ENCODE measurements at regions of chr6 and their contacts with region 1.

Region 1: GRCh38 chr6:137927777-137928218 is 60.7 kb downstream of the TNFAIP3 start:
- DNase-seq: peak; percentile 34 to 81 (median 74)
- ATAC-seq: peak; percentile 100
- H3K4me3 ChIP-seq: no peak overlapping the region
- H3K4me3 Mint-ChIP-seq: peak overlapping the region in 9 of 10 donors; percentile 60 to 87 (median 76)
- H3K27ac ChIP-seq: peak overlapping the region; percentile 46
- H3K27ac Mint-ChIP-seq: peak overlapping the region; percentile 15 to 93 (median 86)
- H3K4me1 ChIP-seq: peaks cover 19 to 25% of the 10 kb centered on the region in 2 donors
- H3K4me1 Mint-ChIP-seq: peaks cover 26 to 55% (median 41%) of the 10 kb centered on the region in 7 donors
- H3K27me3 ChIP-seq: no peaks in the 10 kb centered on the region
- H3K27me3 Mint-ChIP-seq: no peaks in the 10 kb centered on the region

Region 2: GRCh38 chr6:137791281-137792159 is 136.3 kb before region 1 on chr6:
- CTCF ChIA-PET with region 1: no interaction called
- POLR2A ChIA-PET with region 1: no interaction called
- intact Hi-C with region 1: loop called in 1 of 2 experiments (anchors 5 kb)
- DNase-seq: peak in 1 of 9 donors; percentile 26
- ATAC-seq: no peak
- H3K4me3 ChIP-seq: no peak overlapping the region
- H3K4me3 Mint-ChIP-seq: peak overlapping the region in 1 of 10 donors; percentile 45
- H3K27ac ChIP-seq: no peak overlapping the region
- H3K27ac Mint-ChIP-seq: peak overlapping the region in 8 of 9 donors; percentile 1 to 79 (median 36)
- H3K4me1 ChIP-seq: peaks cover 7 to 28% of the 10 kb centered on the region in 2 donors
- H3K4me1 Mint-ChIP-seq: peaks cover 27 to 65% (median 50%) of the 10 kb centered on the region in 7 donors
- H3K27me3 ChIP-seq: no peaks in the 10 kb centered on the region
- H3K27me3 Mint-ChIP-seq: no peaks in the 10 kb centered on the region

Region 3: GRCh38 chr6:137860394-137861005 is 67.3 kb before region 1 on chr6:
- CTCF ChIA-PET with region 1: no interaction called
- POLR2A ChIA-PET with region 1: no interaction called
- intact Hi-C with region 1: no loop called
- DNase-seq: no peak
- ATAC-seq: no peak
- H3K4me3 ChIP-seq: no peak overlapping the region
- H3K4me3 Mint-ChIP-seq: no peak overlapping the region
- H3K27ac ChIP-seq: no peak overlapping the region
- H3K27ac Mint-ChIP-seq: peak overlapping the region in 3 of 9 donors; percentile 0 to 60 (median 20)
- H3K4me1 ChIP-seq: no peaks in the 10 kb centered on the region
- H3K4me1 Mint-ChIP-seq: peaks cover 0 to 35% (median 29%) of the 10 kb centered on the region in 7 donors
- H3K27me3 ChIP-seq: no peaks in the 10 kb centered on the region
- H3K27me3 Mint-ChIP-seq: no peaks in the 10 kb centered on the region

Region 4: GRCh38 chr6:137873273-137873762 is 54.5 kb before region 1 on chr6:
- CTCF ChIA-PET with region 1: interaction called, 4 read pairs
- POLR2A ChIA-PET with region 1: interaction called, 8 read pairs
- intact Hi-C with region 1: loop called in 1 of 2 experiments (anchors 1 kb)
- DNase-seq: peak in 6 of 9 donors; percentile 12 to 81 (median 37)
- ATAC-seq: peak; percentile 54
- H3K4me3 ChIP-seq: peak overlapping the region; percentile 0
- H3K4me3 Mint-ChIP-seq: peak overlapping the region; percentile 60 to 98 (median 94)
- H3K27ac ChIP-seq: peak overlapping the region; percentile 99
- H3K27ac Mint-ChIP-seq: peak overlapping the region; percentile 61 to 99 (median 94)
- H3K4me1 ChIP-seq: peaks cover 38 to 49% of the 10 kb centered on the region in 2 donors
- H3K4me1 Mint-ChIP-seq: peaks cover 53 to 91% (median 78%) of the 10 kb centered on the region in 7 donors
- H3K27me3 ChIP-seq: no peaks in the 10 kb centered on the region
- H3K27me3 Mint-ChIP-seq: no peaks in the 10 kb centered on the region

Region 5: GRCh38 chr6:137878486-137879285 is 49.1 kb before region 1 on chr6:
- CTCF ChIA-PET with region 1: no interaction called
- POLR2A ChIA-PET with region 1: no interaction called
- intact Hi-C with region 1: loop called (anchors 1 to 2 kb)
- DNase-seq: peak in 6 of 9 donors; percentile 28 to 45 (median 30)
- ATAC-seq: no peak
- H3K4me3 ChIP-seq: no peak overlapping the region
- H3K4me3 Mint-ChIP-seq: peak overlapping the region in 7 of 10 donors; percentile 38 to 58 (median 42)
- H3K27ac ChIP-seq: no peak overlapping the region
- H3K27ac Mint-ChIP-seq: peak overlapping the region; percentile 18 to 92 (median 81)
- H3K4me1 ChIP-seq: peaks cover 23 to 45% of the 10 kb centered on the region in 2 donors
- H3K4me1 Mint-ChIP-seq: peaks cover 24 to 84% (median 70%) of the 10 kb centered on the region in 7 donors
- H3K27me3 ChIP-seq: no peaks in the 10 kb centered on the region
- H3K27me3 Mint-ChIP-seq: no peaks in the 10 kb centered on the region

Region 6: DNA sequence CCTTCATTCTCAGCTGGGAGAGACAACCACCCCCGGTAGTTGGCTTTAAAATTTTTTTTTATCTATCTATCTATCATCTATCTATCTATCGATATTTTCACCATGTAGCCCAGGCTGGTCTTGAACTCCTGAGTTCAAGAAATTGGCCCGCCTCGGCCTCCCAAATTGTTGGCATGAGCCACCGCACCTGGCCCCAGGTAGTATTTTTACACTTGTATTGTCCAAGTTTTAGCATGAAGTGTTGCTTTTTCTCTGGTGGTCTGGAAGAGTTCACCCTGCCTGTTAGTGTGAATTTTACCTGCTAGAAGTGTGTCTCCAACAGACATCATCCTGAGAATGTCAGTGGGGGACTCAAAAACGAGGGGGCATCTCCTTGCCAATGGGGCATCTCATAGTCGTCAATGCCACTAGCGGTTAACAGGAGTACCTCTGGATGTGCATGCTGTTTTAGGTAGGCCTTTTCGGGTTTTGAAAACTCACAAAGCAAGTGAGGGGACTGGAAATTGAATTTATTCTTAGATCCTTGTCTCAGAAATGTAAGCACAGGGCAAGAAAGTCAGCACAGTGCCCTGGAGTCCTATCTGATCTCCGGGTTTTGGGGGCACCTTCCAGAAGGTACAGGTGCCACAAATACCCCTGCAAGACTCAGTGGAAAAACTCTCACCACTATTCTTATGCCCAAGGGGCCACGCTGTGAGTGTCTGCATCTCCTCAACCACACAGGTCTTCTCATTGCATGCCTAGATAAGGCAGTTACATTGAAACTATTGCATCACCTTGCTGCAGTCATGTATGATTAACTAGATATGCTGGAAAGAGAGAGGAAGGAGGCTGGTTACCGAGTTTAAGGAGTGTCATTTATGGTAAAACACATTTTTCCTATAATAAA is 23.6 kb before region 1 on chr6:
- CTCF ChIA-PET with region 1: no interaction called
- POLR2A ChIA-PET with region 1: no interaction called
- intact Hi-C with region 1: loop called (anchors 1 to 2 kb)
- DNase-seq: peak in 1 of 9 donors; percentile 49
- ATAC-seq: peak; percentile 72
- H3K4me3 ChIP-seq: no peak overlapping the region
- H3K4me3 Mint-ChIP-seq: peak overlapping the region in 7 of 10 donors; percentile 2 to 79 (median 64)
- H3K27ac ChIP-seq: no peak overlapping the region
- H3K27ac Mint-ChIP-seq: peak overlapping the region in 2 of 9 donors; percentile 10 to 91
- H3K4me1 ChIP-seq: peaks cover 4 to 6% of the 10 kb centered on the region in 2 donors
- H3K4me1 Mint-ChIP-seq: peaks cover 4 to 51% (median 22%) of the 10 kb centered on the region in 7 donors
- H3K27me3 ChIP-seq: no peaks in the 10 kb centered on the region
- H3K27me3 Mint-ChIP-seq: peaks cover 0 to 3% (median 0%) of the 10 kb centered on the region in 5 donors

Region 7: GRCh38 chr6:137910424-137910834 is 17.4 kb before region 1 on chr6:
- CTCF ChIA-PET with region 1: interaction called, 4 read pairs
- POLR2A ChIA-PET with region 1: no interaction called
- intact Hi-C with region 1: loop called (anchors 1 to 2 kb)
- DNase-seq: no peak
- ATAC-seq: peak; percentile 52
- H3K4me3 ChIP-seq: no peak overlapping the region
- H3K4me3 Mint-ChIP-seq: no peak overlapping the region
- H3K27ac ChIP-seq: no peak overlapping the region
- H3K27ac Mint-ChIP-seq: peak overlapping the region in 1 of 9 donors; percentile 10
- H3K4me1 ChIP-seq: peaks cover 1 to 2% of the 10 kb centered on the region in 2 donors
- H3K4me1 Mint-ChIP-seq: peaks cover 13 to 58% (median 25%) of the 10 kb centered on the region in 7 donors
- H3K27me3 ChIP-seq: no peaks in the 10 kb centered on the region
- H3K27me3 Mint-ChIP-seq: peaks cover 0 to 13% (median 0%) of the 10 kb centered on the region in 5 donors

Region 8: DNA sequence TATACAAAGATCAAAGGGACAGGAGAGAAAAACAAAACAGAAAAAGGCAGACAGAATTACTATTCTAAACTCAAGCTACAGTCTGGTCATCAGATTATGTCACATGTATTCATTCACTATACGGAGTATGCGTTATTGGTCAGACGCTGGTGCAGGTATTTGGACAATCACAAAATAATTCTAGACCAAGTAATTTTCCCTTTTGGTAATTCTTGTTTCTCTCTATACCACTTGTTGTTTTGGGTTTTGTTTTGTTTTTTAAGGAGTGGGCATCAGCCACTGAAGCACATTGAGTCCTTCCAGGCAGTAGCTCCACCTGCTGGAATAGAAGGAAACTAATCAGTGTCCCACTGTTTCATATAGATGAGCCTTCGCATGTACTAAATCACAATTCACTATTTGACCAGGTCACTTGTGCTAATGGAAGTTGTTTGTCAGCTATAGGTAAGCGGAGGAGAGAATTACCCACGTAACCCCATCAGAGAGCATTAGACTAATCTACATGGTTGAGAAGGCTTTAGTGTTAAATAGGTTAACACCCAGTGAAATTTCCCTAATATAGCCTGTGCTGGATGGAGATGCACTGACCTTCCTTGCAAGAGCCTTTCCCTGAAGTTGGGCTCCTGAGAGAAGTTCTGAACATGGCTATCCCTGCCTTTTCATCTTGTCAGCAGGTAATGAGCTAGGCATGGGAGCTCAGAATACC is 17.1 kb after region 1 on chr6:
- CTCF ChIA-PET with region 1: no interaction called
- POLR2A ChIA-PET with region 1: no interaction called
- intact Hi-C with region 1: loop called in 1 of 2 experiments (anchors 1 kb)
- DNase-seq: peak in 6 of 9 donors; percentile 7 to 52 (median 39)
- ATAC-seq: peak; percentile 88
- H3K4me3 ChIP-seq: no peak overlapping the region
- H3K4me3 Mint-ChIP-seq: no peak overlapping the region
- H3K27ac ChIP-seq: no peak overlapping the region
- H3K27ac Mint-ChIP-seq: peak overlapping the region in 3 of 9 donors; percentile 45 to 76 (median 59)
- H3K4me1 ChIP-seq: peaks cover 1 to 7% of the 10 kb centered on the region in 2 donors
- H3K4me1 Mint-ChIP-seq: peaks cover 4 to 48% (median 18%) of the 10 kb centered on the region in 7 donors
- H3K27me3 ChIP-seq: no peaks in the 10 kb centered on the region
- H3K27me3 Mint-ChIP-seq: no peaks in the 10 kb centered on the region

Region 9: DNA sequence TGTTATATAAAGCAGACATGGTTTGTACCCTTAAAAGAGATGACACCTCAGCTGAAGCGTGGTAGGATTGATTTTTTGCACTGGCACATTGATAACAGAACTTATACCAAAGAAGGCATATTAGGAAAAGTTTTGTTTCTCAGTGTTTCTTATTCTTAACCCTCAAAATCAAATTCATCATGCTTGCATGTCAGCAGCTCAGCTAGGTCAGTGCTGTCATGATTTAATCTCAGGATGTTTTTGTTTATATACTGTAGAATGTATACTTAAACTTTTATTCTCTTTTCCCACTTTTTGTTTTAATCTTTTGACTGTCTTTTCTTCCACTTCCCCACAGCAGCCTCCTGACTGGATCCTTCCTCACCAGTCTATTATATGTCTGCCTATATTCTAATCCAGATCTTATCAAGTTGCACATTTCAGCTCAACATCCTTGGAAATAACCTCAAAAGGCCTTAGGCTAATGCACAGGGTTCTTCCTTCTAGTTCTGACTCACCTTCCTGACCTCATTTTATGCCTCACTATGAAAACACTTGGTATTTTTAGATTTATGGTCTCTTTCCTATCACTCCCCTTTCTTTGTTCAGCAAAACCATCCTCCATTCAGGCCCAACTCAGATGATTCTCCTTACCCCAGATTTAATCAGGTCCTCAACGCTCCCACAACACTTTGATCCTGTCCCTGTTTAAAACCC is 483.3 kb after region 1 on chr6:
- CTCF ChIA-PET with region 1: no interaction called
- POLR2A ChIA-PET with region 1: no interaction called
- intact Hi-C with region 1: no loop called
- DNase-seq: no peak
- ATAC-seq: no peak
- H3K4me3 ChIP-seq: no peak overlapping the region
- H3K4me3 Mint-ChIP-seq: peak overlapping the region in 1 of 10 donors; percentile 28
- H3K27ac ChIP-seq: no peak overlapping the region
- H3K27ac Mint-ChIP-seq: peak overlapping the region in 7 of 9 donors; percentile 13 to 75 (median 51)
- H3K4me1 ChIP-seq: no peaks in the 10 kb centered on the region
- H3K4me1 Mint-ChIP-seq: peaks cover 10 to 35% (median 28%) of the 10 kb centered on the region in 7 donors
- H3K27me3 ChIP-seq: no peaks in the 10 kb centered on the region
- H3K27me3 Mint-ChIP-seq: no peaks in the 10 kb centered on the region

Measured in naive thymus-derived CD4-positive, alpha-beta T cell (primary cell).